MCF 10A (cell line): ENCODE measurements at regions of chr2 and their contacts with region 1.

Region 1: DNA sequence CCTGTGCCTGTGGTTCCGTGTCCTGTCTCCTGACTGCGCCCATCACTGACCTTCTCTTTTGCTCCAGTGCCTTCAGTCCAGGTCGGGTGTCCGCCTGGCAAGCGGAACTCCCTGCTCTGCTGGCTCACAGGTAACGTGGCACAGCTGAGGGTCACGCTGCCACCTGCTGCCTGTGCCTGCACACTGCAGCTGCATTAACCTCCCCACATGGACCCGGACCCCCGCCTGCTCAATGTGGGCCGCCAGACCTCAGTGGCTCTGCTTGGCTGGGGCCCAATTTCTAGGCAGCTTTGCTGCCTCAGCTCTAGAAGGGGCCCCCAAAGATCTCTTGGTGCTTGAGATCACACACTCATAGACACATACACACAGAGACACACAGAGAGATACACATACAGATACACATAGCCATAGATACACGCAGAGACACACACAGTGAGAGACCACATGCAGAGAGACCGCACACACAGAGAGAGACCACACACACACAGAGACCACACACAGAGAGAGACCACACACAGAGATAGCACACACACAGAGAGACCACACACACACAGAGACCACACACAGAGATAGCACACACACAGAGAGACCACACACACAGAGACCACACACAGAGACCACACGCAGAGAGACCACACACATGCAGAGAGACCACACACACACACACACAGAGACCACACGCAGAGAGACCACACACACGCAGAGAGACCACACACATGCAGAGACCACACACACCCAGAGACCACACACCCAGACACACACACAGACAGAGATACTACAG is 14.9 kb upstream of the CNNM3 start:
- DNase-seq: peak; percentile 64
- H3K4me3 Mint-ChIP-seq: no peak overlapping the region
- H3K27ac Mint-ChIP-seq: no peak overlapping the region
- H3K4me1 Mint-ChIP-seq: no peaks in the 10 kb centered on the region
- H3K27me3 Mint-ChIP-seq: no peaks in the 10 kb centered on the region
- CTCF ChIP-seq: peak; percentile 92

Region 2: DNA sequence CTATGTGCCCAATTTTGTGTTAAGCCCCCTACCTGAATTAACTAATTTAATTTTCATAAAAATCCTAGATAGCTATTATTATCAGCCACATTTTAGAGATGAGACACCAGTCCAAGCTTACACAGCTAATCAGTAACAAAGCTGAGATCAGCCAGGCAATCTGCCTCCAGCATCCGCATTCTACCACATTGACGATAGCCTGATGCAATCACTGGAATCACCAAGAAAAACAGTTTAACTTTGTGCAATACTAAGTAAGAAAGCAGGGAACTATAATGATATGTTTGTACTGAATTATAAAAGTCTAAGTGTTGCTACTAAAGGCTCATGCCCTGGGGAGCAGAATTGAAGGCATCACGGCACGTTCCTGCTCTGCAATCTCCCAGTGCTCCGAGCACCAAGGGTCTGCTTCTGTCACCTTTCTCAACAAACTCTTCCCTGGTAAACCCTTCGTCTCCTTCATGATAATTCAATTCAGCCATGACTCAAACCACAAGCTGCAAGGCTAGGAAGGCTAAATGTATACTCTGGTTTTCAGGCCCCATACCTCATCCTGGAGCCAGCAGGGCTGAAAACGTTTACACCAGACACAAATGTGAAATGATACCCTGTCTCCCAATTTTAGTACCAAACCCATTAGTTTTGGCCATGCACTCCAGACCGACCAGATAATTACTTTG is 182.5 kb before region 1 on chr2:
- CTCF ChIA-PET with region 1: interaction called, 6 read pairs
- POLR2A ChIA-PET with region 1: no interaction called
- intact Hi-C with region 1: loop called (anchors 5 kb)
- DNase-seq: peak; percentile 31
- H3K4me3 Mint-ChIP-seq: no peak overlapping the region
- H3K27ac Mint-ChIP-seq: peak overlapping the region; percentile 92
- H3K4me1 Mint-ChIP-seq: peaks cover 16% of the 10 kb centered on the region
- H3K27me3 Mint-ChIP-seq: no peaks in the 10 kb centered on the region
- CTCF ChIP-seq: no peak

Region 3: GRCh38 chr2:96739633-96740428 is 61.4 kb before region 1 on chr2 and contains the start of gene LMAN2L:
- CTCF ChIA-PET with region 1: interaction called, 4 read pairs
- POLR2A ChIA-PET with region 1: interaction called, 4 read pairs
- intact Hi-C with region 1: loop called (anchors 10 kb)
- DNase-seq: peak; percentile 98
- H3K4me3 Mint-ChIP-seq: peak within 1 kb of the TSS; percentile 96
- H3K27ac Mint-ChIP-seq: peak within 1 kb of the TSS; percentile 97
- H3K4me1 Mint-ChIP-seq: peaks cover 5% of the 10 kb centered on the region
- H3K27me3 Mint-ChIP-seq: no peaks in the 10 kb centered on the region
- CTCF ChIP-seq: no peak
- total RNA-seq, gene LMAN2L: 6.5 and 7.1 TPM in 2 replicates

Region 4: GRCh38 chr2:96824079-96824870 is 23.1 kb after region 1 on chr2:
- CTCF ChIA-PET with region 1: no interaction called
- POLR2A ChIA-PET with region 1: no interaction called
- intact Hi-C with region 1: no loop called
- DNase-seq: no peak
- H3K4me3 Mint-ChIP-seq: no peak overlapping the region
- H3K27ac Mint-ChIP-seq: no peak overlapping the region
- H3K4me1 Mint-ChIP-seq: peaks cover 14% of the 10 kb centered on the region
- H3K27me3 Mint-ChIP-seq: no peaks in the 10 kb centered on the region
- CTCF ChIP-seq: no peak

Region 5: DNA sequence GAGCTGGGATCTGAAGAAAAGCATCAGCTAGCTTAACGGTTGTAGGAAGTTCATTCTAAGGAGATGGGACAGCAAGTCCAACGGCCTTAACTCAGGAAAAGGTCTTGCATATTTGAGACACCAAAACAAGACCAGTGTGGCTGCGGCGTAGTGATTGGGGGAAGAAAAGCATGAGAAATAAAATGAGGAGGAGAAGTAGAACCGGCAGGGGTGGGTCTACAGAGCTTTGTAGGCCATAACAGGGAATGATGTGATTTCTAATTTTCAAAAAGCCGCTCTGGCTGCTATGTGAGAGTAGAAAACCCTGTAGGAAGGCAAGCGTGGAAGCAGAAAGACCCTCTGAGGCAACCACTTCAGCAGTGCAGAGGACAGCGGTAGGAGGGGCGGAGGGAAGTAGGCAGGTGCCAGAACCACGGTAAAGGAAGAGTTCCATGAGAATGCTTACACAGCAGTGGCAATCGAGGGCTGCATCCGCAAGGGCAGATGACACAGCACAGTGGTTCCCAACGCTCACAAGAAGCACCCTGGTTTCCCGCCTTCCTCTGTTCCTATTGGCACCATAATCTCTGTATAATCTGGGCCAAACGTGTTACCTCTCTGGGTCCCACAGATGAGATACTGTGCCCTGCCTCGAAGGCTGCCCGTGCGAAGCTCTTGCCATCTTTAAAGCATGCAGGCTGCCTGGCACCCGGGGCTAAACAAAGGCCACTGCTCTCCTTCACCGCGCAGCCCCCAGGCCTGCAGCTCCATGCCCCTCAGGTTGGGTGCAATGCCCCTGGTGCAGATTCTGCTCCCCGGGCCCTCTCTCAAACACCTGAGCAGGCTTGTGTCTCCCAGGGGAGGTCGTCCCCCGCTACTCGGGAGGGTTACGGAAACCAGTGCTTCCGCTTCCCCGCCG is 55.8 kb after region 1 on chr2:
- CTCF ChIA-PET with region 1: no interaction called
- POLR2A ChIA-PET with region 1: no interaction called
- intact Hi-C with region 1: no loop called
- DNase-seq: no peak
- H3K4me3 Mint-ChIP-seq: peak overlapping the region; percentile 60
- H3K27ac Mint-ChIP-seq: peak overlapping the region; percentile 49
- H3K4me1 Mint-ChIP-seq: peaks cover 14% of the 10 kb centered on the region
- H3K27me3 Mint-ChIP-seq: no peaks in the 10 kb centered on the region
- CTCF ChIP-seq: no peak

Region 6: GRCh38 chr2:96913398-96914202 is 112.4 kb after region 1 on chr2:
- CTCF ChIA-PET with region 1: no interaction called
- POLR2A ChIA-PET with region 1: no interaction called
- intact Hi-C with region 1: no loop called
- DNase-seq: no peak
- H3K4me3 Mint-ChIP-seq: no peak overlapping the region
- H3K27ac Mint-ChIP-seq: no peak overlapping the region
- H3K4me1 Mint-ChIP-seq: peaks cover 34% of the 10 kb centered on the region
- H3K27me3 Mint-ChIP-seq: no peaks in the 10 kb centered on the region
- CTCF ChIP-seq: no peak